ENCODE measurements at regions of chr10 and their contacts with region 1.

Region 1: DNA sequence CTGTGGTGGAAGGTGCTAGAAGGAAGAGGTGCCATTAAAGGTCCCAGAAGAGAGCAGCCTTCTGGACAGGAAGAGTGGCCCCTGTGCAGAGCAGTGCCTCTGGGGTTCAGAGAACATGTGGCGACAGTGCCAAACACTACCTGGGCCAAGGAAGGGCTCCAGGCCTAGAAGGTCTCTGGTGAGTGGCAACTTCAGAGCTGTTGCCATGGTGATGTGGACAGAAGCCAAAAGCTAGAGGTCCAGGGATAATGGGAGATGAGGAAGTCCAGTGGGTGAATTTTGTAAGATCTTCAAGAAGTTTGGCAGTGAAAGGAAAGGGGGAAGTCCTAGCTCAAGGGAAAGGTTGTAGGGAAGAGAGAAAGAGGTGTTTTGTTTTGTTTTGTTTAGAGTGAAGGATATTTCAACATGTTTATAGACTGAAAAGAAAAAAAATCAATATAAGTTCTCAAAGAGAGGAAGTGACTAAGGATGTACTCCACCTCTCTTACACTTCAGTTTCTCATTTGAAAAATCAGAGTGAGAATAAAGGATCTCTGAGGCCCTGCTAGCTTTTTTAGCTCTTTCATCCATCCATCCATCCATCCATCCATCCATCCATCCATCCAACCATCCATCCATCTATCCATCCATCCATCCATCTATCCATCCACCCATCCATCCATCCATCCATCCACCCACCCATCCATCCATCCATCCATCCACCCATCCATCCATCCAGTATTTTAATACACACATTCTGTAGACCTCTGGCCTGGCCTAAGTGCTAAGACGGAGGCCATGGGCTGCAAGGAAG is 77.1 kb upstream of the DUSP5 start:
- DNase-seq: peak; percentile 19
- ATAC-seq: peak; percentile 64
- H3K4me3 Mint-ChIP-seq: no peak overlapping the region
- H3K27ac Mint-ChIP-seq: peak overlapping the region; percentile 75
- H3K4me1 Mint-ChIP-seq: peaks cover 57% of the 10 kb centered on the region
- H3K27me3 Mint-ChIP-seq: no peaks in the 10 kb centered on the region
- CTCF ChIP-seq: no peak

Region 2: DNA sequence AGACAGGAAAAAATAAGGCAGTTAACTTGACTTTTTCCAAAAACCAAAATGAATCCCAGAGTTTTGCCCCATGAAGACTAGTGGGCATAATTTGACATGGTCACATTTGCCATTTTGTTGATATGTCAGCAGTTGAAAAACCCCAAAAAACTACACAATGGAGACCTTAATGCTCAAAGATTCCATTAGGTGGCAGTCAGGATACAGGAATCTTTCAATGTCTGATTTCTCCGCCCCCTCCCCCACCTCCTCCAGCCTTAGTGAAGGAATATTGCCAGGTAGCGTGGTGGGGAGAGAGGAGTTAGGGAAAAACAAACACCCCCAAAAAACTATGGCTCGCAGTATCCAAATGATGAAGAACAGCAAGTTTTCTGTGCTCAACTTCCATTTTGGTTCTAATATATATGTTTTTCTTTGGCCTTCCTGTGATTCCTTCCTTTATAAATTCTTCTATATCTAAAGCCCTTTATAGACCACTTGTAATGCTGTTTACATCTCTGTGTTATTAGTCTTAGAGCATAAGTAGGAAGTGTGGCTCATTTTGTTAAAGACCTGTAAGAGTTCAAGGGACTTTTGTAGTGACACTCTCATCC is 109.1 kb before region 1 on chr10:
- CTCF ChIA-PET with region 1: interaction called, 4 read pairs
- POLR2A ChIA-PET with region 1: no interaction called
- intact Hi-C with region 1: loop called (anchors 5 kb)
- DNase-seq: peak; percentile 56
- ATAC-seq: peak; percentile 67
- H3K4me3 Mint-ChIP-seq: no peak overlapping the region
- H3K27ac Mint-ChIP-seq: no peak overlapping the region
- H3K4me1 Mint-ChIP-seq: peaks cover 20% of the 10 kb centered on the region
- H3K27me3 Mint-ChIP-seq: peaks cover 6% of the 10 kb centered on the region
- CTCF ChIP-seq: peak; percentile 64